Calu3 (cell line): ENCODE measurements at regions of chr6 and their contacts with region 1.

Region 1: GRCh38 chr6:97645757-97646156 is 362.7 kb upstream of the MMS22L start:
- DNase-seq: no peak
- H3K4me3 Mint-ChIP-seq: no peak overlapping the region
- H3K27ac Mint-ChIP-seq: no peak overlapping the region
- H3K4me1 Mint-ChIP-seq: no peaks in the 10 kb centered on the region
- H3K27me3 Mint-ChIP-seq: no peaks in the 10 kb centered on the region
- CTCF ChIP-seq: no peak

Region 2: GRCh38 chr6:96235927-96236326 is 1409.8 kb before region 1 on chr6:
- CTCF ChIA-PET with region 1: no interaction called
- intact Hi-C with region 1: no loop called
- DNase-seq: no peak
- H3K4me3 Mint-ChIP-seq: no peak overlapping the region
- H3K27ac Mint-ChIP-seq: no peak overlapping the region
- H3K4me1 Mint-ChIP-seq: peaks cover 11% of the 10 kb centered on the region
- H3K27me3 Mint-ChIP-seq: no peaks in the 10 kb centered on the region
- CTCF ChIP-seq: no peak

Region 3: GRCh38 chr6:97322811-97323210 is 322.9 kb before region 1 on chr6:
- CTCF ChIA-PET with region 1: no interaction called
- intact Hi-C with region 1: loop called (anchors 5 kb)
- DNase-seq: no peak
- H3K4me3 Mint-ChIP-seq: no peak overlapping the region
- H3K27ac Mint-ChIP-seq: no peak overlapping the region
- H3K4me1 Mint-ChIP-seq: no peaks in the 10 kb centered on the region
- H3K27me3 Mint-ChIP-seq: no peaks in the 10 kb centered on the region
- CTCF ChIP-seq: no peak